Mammary epithelial cell (primary cell): ENCODE measurements at regions of chr6 and their contacts with region 1.

Region 1: DNA sequence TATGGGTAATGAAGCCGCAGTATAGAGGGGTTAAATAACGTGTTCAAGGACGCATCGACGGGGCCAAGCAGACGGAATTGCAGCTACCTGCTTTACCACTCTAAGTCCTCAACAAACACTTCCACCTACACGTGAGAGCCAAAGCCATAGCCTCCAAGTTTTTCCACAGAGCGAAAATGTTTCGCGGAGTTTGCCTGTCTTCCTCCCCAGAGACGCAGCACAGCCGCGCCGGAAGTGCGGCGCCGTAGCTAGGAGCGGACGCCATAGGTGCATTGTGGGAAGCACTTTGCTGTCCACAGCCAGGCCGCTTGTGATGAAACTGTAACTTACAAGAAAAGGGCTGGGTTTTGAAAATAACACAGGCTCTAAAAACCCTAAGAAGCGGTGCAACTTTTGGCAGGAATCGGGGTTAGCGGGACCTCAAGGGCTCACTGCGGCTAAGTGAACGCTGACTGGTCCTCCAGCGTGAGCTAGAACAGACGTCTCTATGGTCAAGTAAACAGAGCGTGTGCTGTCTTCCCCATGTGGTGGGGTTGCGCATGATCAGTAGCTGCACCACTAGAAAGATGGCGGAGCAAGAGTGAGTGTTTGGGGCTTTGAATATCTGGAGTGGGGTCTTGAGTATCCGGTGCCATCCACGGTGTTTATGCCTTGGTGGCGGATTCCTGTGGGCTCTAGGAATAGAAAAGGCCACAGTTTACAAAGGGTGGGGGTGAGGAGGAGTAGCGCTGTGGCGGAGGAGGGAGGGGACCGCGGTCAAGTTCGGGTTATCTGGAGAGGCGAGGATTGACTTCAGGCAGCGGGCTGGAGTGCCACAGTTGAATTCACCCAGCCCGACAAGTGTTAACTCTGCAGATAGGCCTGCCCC is at the start of gene RPL7L1:
- DNase-seq: peak; percentile 89
- H3K4me3 ChIP-seq: peak within 1 kb of the TSS; percentile 87 to 100 (median 93)
- H3K27ac ChIP-seq: peak within 1 kb of the TSS; percentile 83
- H3K4me1 ChIP-seq: peaks cover 6% of the 10 kb centered on the region
- H3K27me3 ChIP-seq: no peaks in the 10 kb centered on the region
- CTCF ChIP-seq: no peak
- total RNA-seq, gene RPL7L1: 102 to 106 TPM

Region 2: GRCh38 chr6:42217519-42218367 is 661.9 kb before region 1 on chr6 and contains the start of gene MRPS10:
- CTCF ChIA-PET with region 1: no interaction called
- dilution Hi-C with region 1: no loop called
- in situ Hi-C with region 1: loop called in 1 of 2 experiments (anchors 25 kb)
- intact Hi-C with region 1: loop called (anchors 10 kb)
- DNase-seq: peak; percentile 90
- H3K4me3 ChIP-seq: peak within 1 kb of the TSS; percentile 78 to 100 (median 80)
- H3K27ac ChIP-seq: peak within 1 kb of the TSS; percentile 83
- H3K4me1 ChIP-seq: peaks cover 27% of the 10 kb centered on the region
- H3K27me3 ChIP-seq: no peaks in the 10 kb centered on the region
- CTCF ChIP-seq: no peak
- total RNA-seq, gene MRPS10: 41.2 to 50.9 TPM

Region 3: GRCh38 chr6:42661540-42662153 is 218.0 kb before region 1 on chr6:
- CTCF ChIA-PET with region 1: no interaction called
- dilution Hi-C with region 1: no loop called
- in situ Hi-C with region 1: loop called in 1 of 2 experiments (anchors 5 kb)
- intact Hi-C with region 1: loop called (anchors 1 kb)
- DNase-seq: peak; percentile 51
- H3K4me3 ChIP-seq: no peak overlapping the region
- H3K27ac ChIP-seq: no peak overlapping the region
- H3K4me1 ChIP-seq: no peaks in the 10 kb centered on the region
- H3K27me3 ChIP-seq: no peaks in the 10 kb centered on the region
- CTCF ChIP-seq: peak; percentile 76 to 86

Region 4: DNA sequence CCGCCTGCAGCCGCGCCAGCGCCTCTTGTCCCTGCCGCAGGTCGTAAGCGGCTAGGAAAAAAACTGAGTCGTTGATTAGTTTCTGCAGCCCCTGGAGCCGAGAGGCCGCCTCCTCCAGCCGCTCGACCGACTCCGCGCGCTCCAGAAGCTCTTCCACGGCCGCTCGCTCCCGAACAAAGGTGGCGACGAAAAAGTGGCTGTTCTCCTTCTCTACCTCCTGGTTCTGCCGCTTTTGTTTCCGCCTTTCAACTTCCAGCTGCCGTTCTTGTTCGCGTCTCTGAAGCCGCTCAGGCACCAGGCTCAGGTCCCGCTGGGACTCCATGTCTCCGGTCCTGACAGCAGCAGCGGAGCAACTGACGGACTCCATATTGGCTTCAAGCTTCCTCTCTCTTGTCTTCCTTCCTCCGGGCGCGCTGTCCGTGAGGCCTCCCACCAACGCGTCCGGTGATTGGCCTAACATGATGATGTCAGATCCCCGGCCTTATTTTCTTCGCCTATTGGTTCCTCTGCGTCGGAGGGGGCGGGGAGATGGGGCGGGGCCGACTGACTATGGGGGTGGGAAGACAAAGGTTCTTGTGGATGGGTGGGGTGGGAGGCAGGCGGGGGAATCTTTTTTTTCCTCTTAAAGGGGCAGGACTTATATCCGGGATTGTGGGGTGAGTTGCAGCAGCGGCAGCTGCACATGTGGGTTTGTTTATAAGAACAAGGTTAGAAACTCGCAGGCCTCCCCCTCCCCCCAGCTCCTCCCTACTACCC is 133.7 kb before region 1 on chr6 and contains the start of gene TBCC:
- CTCF ChIA-PET with region 1: no interaction called
- dilution Hi-C with region 1: no loop called
- in situ Hi-C with region 1: loop called in 1 of 2 experiments (anchors 25 kb)
- intact Hi-C with region 1: loop called (anchors 1 kb)
- DNase-seq: peak; percentile 98
- H3K4me3 ChIP-seq: peak within 1 kb of the TSS; percentile 79 to 96 (median 95)
- H3K27ac ChIP-seq: peak within 1 kb of the TSS; percentile 88
- H3K4me1 ChIP-seq: peaks cover 11% of the 10 kb centered on the region
- H3K27me3 ChIP-seq: no peaks in the 10 kb centered on the region
- CTCF ChIP-seq: no peak
- total RNA-seq, gene TBCC: 13.5 to 27.8 TPM

Region 5: GRCh38 chr6:42819803-42820511 is 59.6 kb before region 1 on chr6:
- CTCF ChIA-PET with region 1: no interaction called
- dilution Hi-C with region 1: loop called (anchors 5 kb)
- in situ Hi-C with region 1: no loop called
- intact Hi-C with region 1: no loop called
- DNase-seq: no peak
- H3K4me3 ChIP-seq: no peak overlapping the region
- H3K27ac ChIP-seq: no peak overlapping the region
- H3K4me1 ChIP-seq: no peaks in the 10 kb centered on the region
- H3K27me3 ChIP-seq: no peaks in the 10 kb centered on the region
- CTCF ChIP-seq: peak in 1 of 2 donors; percentile 21

Region 6: GRCh38 chr6:42911171-42912021 is 31.8 kb after region 1 on chr6:
- CTCF ChIA-PET with region 1: no interaction called
- dilution Hi-C with region 1: no loop called
- in situ Hi-C with region 1: no loop called
- intact Hi-C with region 1: no loop called
- DNase-seq: no peak
- H3K4me3 ChIP-seq: no peak overlapping the region
- H3K27ac ChIP-seq: no peak overlapping the region
- H3K4me1 ChIP-seq: no peaks in the 10 kb centered on the region
- H3K27me3 ChIP-seq: no peaks in the 10 kb centered on the region
- CTCF ChIP-seq: no peak